PC-3 (cell line): ENCODE measurements at regions of chr4 and their contacts with region 1.

Region 1: DNA sequence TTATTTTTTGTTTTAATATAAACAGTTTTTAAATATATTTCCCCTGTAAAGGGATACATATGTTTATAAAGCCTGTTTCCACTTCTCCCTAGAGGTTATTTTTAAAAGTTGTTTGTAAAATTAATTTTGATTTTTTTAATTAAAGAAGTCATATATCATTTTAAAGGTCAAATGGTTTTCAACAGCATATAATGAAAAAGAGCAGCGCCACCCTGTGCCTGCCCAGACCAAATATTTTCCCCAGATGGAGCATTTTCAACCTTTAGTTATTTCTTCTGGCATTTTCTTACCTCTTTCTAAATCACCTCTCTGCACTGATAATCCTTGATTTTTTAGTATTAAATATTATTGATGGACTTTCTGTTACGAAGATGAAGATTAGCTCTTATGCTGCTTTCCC is 21.0 kb downstream of the MSX1 start:
- DNase-seq: peak; percentile 29
- ATAC-seq: no peak
- H3K4me3 ChIP-seq: no peak overlapping the region
- H3K27ac ChIP-seq: no peak overlapping the region
- H3K4me1 ChIP-seq: no peaks in the 10 kb centered on the region
- H3K27me3 ChIP-seq: no peaks in the 10 kb centered on the region; the same call in 1 of the 2 replicates
- CTCF ChIP-seq: peak; percentile 55

Region 2: GRCh38 chr4:4488405-4489404 is 391.8 kb before region 1 on chr4:
- CTCF ChIA-PET with region 1: no interaction called
- POLR2A ChIA-PET with region 1: no interaction called
- intact Hi-C with region 1: loop called (anchors 1 kb)
- DNase-seq: peak; percentile 76
- ATAC-seq: peak; percentile 93
- H3K4me3 ChIP-seq: no peak overlapping the region
- H3K27ac ChIP-seq: no peak overlapping the region
- H3K4me1 ChIP-seq: no peaks in the 10 kb centered on the region
- H3K27me3 ChIP-seq: no peaks in the 10 kb centered on the region
- CTCF ChIP-seq: peak; percentile 84

Region 3: GRCh38 chr4:4575273-4576211 is 304.9 kb before region 1 on chr4:
- CTCF ChIA-PET with region 1: no interaction called
- POLR2A ChIA-PET with region 1: no interaction called
- intact Hi-C with region 1: loop called (anchors 5 kb)
- DNase-seq: peak; percentile 50
- ATAC-seq: peak; percentile 86
- H3K4me3 ChIP-seq: peak overlapping the region; percentile 79
- H3K27ac ChIP-seq: peak overlapping the region; percentile 33; the same call in 1 of the 2 replicates
- H3K4me1 ChIP-seq: no peaks in the 10 kb centered on the region; the same call in 1 of the 2 replicates
- H3K27me3 ChIP-seq: no peaks in the 10 kb centered on the region
- CTCF ChIP-seq: no peak; the same call in 1 of the 2 replicates

Region 4: GRCh38 chr4:5101571-5101970 is 221.1 kb after region 1 on chr4:
- CTCF ChIA-PET with region 1: no interaction called
- POLR2A ChIA-PET with region 1: no interaction called
- intact Hi-C with region 1: no loop called
- DNase-seq: no peak
- ATAC-seq: no peak
- H3K4me3 ChIP-seq: no peak overlapping the region
- H3K27ac ChIP-seq: no peak overlapping the region
- H3K4me1 ChIP-seq: no peaks in the 10 kb centered on the region
- H3K27me3 ChIP-seq: peaks cover 14% of the 10 kb centered on the region; the same call in 1 of the 2 replicates
- CTCF ChIP-seq: no peak